Posterior cingulate gyrus (tissue), 11 donors: ENCODE measurements at regions of chr20 and their contacts with region 1.

Region 1: DNA sequence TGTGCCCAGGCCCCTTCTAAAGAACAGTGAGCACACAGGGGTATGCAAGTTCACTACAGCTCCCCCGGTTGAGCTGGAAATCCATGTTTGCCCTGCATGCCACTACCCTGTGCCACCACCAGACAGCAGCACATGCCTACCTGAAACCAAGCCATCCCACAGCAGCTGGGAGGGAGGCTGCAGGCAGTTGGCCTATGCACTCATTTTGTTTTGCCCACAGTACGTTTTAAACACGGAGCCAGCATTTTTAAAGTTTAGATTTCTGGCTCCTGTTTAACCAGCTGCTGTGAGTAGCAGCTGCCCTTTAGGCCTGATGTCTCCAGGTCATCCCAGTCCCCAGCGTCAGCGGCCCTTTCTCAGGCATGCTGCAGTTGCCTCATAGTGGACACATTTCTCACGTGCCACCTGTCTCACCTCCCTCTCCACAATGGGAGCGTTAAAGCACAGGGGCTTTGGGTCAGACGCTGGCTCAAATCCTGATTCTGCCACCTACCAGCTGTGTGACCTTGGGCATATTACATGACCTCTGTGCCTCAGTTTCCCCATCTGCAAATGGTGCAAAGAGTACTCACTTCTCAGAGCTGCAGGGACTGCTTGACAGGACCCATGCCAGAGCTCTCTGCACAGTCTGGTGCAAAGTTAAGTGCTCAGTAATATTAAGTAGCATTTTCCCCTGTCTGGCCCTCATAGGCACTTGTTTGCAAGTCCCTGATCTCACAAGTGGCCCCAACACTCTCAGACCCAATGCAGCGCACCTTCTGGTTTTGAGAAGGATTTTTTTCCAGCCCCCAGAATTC is 8.1 kb upstream of the UBE2V1 start:
- DNase-seq: peak; percentile 57 to 96 (median 74)

Region 2: GRCh38 chr20:49549811-49550551 is 571.1 kb before region 1 on chr20:
- intact Hi-C with region 1: no loop called
- DNase-seq: peak in 1 of 10 donors; percentile 20

Region 3: GRCh38 chr20:50169329-50169831 is 48.3 kb after region 1 on chr20:
- intact Hi-C with region 1: loop called (anchors 1 kb)
- DNase-seq: peak in 9 of 10 donors; percentile 50 to 95 (median 80)

Region 4: DNA sequence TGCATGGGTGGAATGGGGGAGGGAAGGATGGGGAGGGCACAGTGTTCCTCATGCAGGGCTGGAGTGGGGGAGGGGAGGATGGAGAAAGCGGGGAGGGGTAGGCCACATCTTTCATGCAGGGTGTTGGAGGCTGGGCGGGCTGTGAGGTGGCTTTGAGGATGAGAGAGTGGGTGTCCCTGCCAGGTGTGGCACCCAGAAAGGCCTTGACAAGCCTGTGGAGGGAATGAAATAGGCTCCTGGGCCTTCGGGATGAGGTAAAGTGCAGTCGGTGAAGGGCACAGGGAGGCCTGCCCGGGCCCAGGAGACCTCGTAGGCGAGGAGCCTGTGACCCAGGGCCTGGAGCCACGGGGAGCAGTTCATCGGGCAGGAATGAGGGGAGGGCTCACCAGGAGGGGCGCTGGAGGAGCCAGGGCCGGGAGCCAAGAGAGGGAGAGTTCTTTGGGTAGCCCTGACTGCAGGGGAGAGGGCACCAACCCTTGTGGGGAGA is 77.1 kb after region 1 on chr20:
- intact Hi-C with region 1: no loop called
- DNase-seq: peak in 1 of 10 donors; percentile 47